Posterior vena cava (tissue), 2 donors: ENCODE measurements at regions of chr20 and their contacts with region 1.

Region 1: DNA sequence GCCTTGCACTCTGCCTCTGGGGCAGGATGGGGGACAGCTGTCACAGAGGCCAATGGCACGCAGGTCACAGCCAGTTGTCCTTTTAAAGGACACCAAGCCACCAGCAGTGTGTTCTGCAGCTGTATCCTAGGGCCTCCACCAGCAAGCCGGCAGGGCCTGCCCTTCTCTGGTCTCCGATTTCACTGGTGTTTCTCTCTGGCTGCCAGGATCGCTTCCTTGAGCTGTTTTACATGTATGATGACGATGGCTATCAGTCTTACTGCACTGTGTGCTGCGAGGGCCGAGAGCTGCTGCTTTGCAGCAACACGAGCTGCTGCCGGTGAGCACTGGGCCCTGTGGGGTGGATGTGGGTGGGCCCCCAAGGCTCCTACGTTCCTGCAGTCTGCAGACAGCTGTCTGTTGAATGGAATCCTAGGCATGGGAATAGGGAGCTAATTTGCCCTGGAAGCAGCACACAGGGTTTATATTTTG is 22.7 kb upstream of the MAPRE1 start:
- DNase-seq: no peak

Region 2: GRCh38 chr20:32828029-32828680 is 31.1 kb after region 1 on chr20:
- intact Hi-C with region 1: loop called in 1 of 2 experiments (anchors 1 kb)
- DNase-seq: no peak